CD4-positive, alpha-beta memory T cell (primary cell): ENCODE measurements at regions of chr10 and their contacts with region 1.

Region 1: GRCh38 chr10:32367793-32368453 is 21.0 kb upstream of the EPC1 start:
- DNase-seq: peak; percentile 72 to 77 (median 75)
- H3K4me3 ChIP-seq: no peak overlapping the region
- H3K4me3 Mint-ChIP-seq: peak overlapping the region in 7 of 8 donors; percentile 31 to 76 (median 70)
- H3K27ac ChIP-seq: peak overlapping the region; percentile 33
- H3K27ac Mint-ChIP-seq: peak overlapping the region; percentile 62 to 92 (median 84)
- H3K4me1 ChIP-seq: peaks cover 83% of the 10 kb centered on the region
- H3K4me1 Mint-ChIP-seq: peaks cover 47 to 84% (median 64%) of the 10 kb centered on the region in 4 donors
- H3K27me3 ChIP-seq: no peaks in the 10 kb centered on the region
- H3K27me3 Mint-ChIP-seq: no peaks in the 10 kb centered on the region

Region 2: DNA sequence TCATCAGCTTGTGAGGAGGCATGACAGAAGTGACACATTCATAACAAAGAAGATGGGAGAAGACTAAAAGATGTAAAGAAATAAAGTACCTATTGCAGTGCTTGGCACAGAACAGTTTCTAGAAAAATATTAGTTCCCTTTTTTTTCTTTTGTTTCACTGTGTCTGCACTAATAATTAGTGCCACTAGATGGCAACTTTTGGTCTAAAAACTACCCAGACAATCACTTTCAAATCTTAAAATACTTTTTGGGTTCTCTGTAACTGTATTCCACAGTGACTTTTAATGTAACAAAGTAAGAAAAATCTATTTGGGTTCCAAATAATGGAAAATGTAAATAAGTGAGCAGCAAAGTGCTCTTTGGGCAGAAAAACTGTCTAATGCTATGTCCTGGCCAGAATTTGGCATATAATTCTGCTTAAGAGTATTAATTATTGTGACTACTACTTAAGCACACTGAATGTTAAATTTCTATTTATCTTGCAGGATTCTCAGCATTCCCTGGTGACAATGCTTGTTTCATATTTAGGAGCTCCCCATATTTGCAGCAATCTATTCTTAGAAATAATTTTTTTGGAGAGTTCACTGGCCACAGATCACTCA is 176.9 kb before region 1 on chr10:
- CTCF ChIA-PET with region 1: interaction called, 11 read pairs
- POLR2A ChIA-PET with region 1: no interaction called
- intact Hi-C with region 1: loop called (anchors 1 kb)
- DNase-seq: peak in 4 of 5 donors; percentile 31 to 44 (median 40)
- H3K4me3 ChIP-seq: no peak overlapping the region
- H3K4me3 Mint-ChIP-seq: no peak overlapping the region
- H3K27ac ChIP-seq: no peak overlapping the region
- H3K27ac Mint-ChIP-seq: peak overlapping the region in 4 of 7 donors; percentile 5 to 59 (median 50)
- H3K4me1 ChIP-seq: no peaks in the 10 kb centered on the region
- H3K4me1 Mint-ChIP-seq: peaks cover 0 to 6% (median 3%) of the 10 kb centered on the region in 4 donors
- H3K27me3 ChIP-seq: no peaks in the 10 kb centered on the region
- H3K27me3 Mint-ChIP-seq: no peaks in the 10 kb centered on the region

Region 3: GRCh38 chr10:32357056-32357735 is 10.7 kb before region 1 on chr10:
- CTCF ChIA-PET with region 1: interaction called, 42 read pairs
- POLR2A ChIA-PET with region 1: interaction called, 22 read pairs
- intact Hi-C with region 1: loop called (anchors 1 kb)
- DNase-seq: peak; percentile 52 to 71 (median 64)
- H3K4me3 ChIP-seq: no peak overlapping the region
- H3K4me3 Mint-ChIP-seq: peak overlapping the region; percentile 12 to 81 (median 72)
- H3K27ac ChIP-seq: peak overlapping the region; percentile 46
- H3K27ac Mint-ChIP-seq: peak overlapping the region; percentile 79 to 94 (median 88)
- H3K4me1 ChIP-seq: peaks cover 90% of the 10 kb centered on the region
- H3K4me1 Mint-ChIP-seq: peaks cover 57 to 89% (median 70%) of the 10 kb centered on the region in 4 donors
- H3K27me3 ChIP-seq: no peaks in the 10 kb centered on the region
- H3K27me3 Mint-ChIP-seq: no peaks in the 10 kb centered on the region

Region 4: DNA sequence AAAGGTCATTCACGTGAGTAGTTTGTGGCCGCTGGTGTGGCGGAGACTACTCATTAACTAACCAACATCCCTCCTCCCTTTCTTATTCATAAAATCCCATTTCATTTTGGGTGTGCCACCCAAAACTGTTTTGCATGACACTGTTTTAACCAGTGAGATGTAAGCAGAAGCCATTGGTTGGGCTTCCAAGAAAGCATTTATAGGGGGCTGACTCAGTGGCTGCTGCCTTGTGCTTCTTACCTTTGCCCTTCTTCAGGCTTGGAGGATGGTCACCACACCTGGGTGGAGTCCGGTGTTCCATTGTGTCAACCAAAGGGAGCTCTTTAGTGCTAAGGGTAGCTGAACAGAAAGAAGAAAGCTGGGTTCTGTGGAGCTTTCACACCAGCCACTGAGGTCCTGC is 16.2 kb after region 1 on chr10:
- CTCF ChIA-PET with region 1: interaction called, 43 read pairs
- POLR2A ChIA-PET with region 1: interaction called, 16 read pairs
- intact Hi-C with region 1: no loop called
- DNase-seq: no peak
- H3K4me3 ChIP-seq: no peak overlapping the region
- H3K4me3 Mint-ChIP-seq: no peak overlapping the region
- H3K27ac ChIP-seq: no peak overlapping the region
- H3K27ac Mint-ChIP-seq: no peak overlapping the region
- H3K4me1 ChIP-seq: peaks cover 11% of the 10 kb centered on the region
- H3K4me1 Mint-ChIP-seq: peaks cover 9 to 14% (median 10%) of the 10 kb centered on the region in 4 donors
- H3K27me3 ChIP-seq: no peaks in the 10 kb centered on the region
- H3K27me3 Mint-ChIP-seq: no peaks in the 10 kb centered on the region